ENCODE measurements at regions of chr16 and their contacts with region 1.

Region 1: GRCh38 chr16:49855280-49855821 is 561 bp downstream of the ZNF423 start:
- DNase-seq: peak; percentile 84
- H3K4me3 ChIP-seq: peak overlapping the region; percentile 70 to 79
- H3K27ac ChIP-seq: peak overlapping the region; percentile 85 to 86
- H3K4me1 ChIP-seq: peaks cover 9% of the 10 kb centered on the region
- H3K27me3 ChIP-seq: no peaks in the 10 kb centered on the region
- CTCF ChIP-seq: no peak
- POLR2A ChIP-seq: peak; percentile 63

Region 2: GRCh38 chr16:49491771-49492761 is 363.3 kb before region 1 on chr16:
- intact Hi-C with region 1: loop called (anchors 5 kb)
- DNase-seq: peak; percentile 59
- H3K4me3 ChIP-seq: peak overlapping the region; percentile 23 to 35
- H3K27ac ChIP-seq: no peak overlapping the region
- H3K4me1 ChIP-seq: peaks cover 4% of the 10 kb centered on the region
- H3K27me3 ChIP-seq: no peaks in the 10 kb centered on the region
- CTCF ChIP-seq: peak; percentile 79 to 91 (median 85)
- POLR2A ChIP-seq: no peak

Region 3: DNA sequence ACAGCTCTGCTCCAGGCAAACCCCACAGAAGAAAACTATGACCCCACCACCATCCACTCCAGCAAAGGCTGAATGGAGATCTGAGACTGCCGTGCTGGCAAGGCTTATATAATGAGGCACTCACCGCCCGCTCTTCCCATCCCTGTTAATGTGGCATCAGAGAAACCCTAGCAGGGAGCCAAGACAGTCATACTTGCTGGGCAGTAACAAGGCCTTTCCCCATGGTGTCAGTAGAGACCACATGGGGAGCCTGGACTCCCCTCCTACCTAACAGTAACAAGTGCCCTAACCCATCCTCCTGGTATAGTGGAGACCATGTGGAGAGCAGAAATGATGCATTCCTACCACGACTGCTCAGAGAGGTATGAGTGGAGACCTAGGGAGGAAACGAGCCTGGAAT is 246.6 kb before region 1 on chr16:
- intact Hi-C with region 1: loop called (anchors 5 kb)
- DNase-seq: no peak
- H3K4me3 ChIP-seq: no peak overlapping the region
- H3K27ac ChIP-seq: no peak overlapping the region
- H3K4me1 ChIP-seq: no peaks in the 10 kb centered on the region
- H3K27me3 ChIP-seq: peaks cover 2% of the 10 kb centered on the region
- CTCF ChIP-seq: peak in 1 of 4 experiments; percentile 42
- POLR2A ChIP-seq: no peak

Region 4: GRCh38 chr16:49652456-49653172 is 202.7 kb before region 1 on chr16:
- intact Hi-C with region 1: loop called (anchors 5 kb)
- DNase-seq: no peak
- H3K4me3 ChIP-seq: no peak overlapping the region
- H3K27ac ChIP-seq: peak overlapping the region in 1 of 2 donors; percentile 54
- H3K4me1 ChIP-seq: no peaks in the 10 kb centered on the region
- H3K27me3 ChIP-seq: no peaks in the 10 kb centered on the region
- CTCF ChIP-seq: no peak
- POLR2A ChIP-seq: no peak

Region 5: GRCh38 chr16:49698931-49699840 is 156.2 kb before region 1 on chr16:
- intact Hi-C with region 1: loop called (anchors 5 kb)
- DNase-seq: no peak
- H3K4me3 ChIP-seq: no peak overlapping the region
- H3K27ac ChIP-seq: peak overlapping the region; percentile 8 to 62
- H3K4me1 ChIP-seq: no peaks in the 10 kb centered on the region
- H3K27me3 ChIP-seq: no peaks in the 10 kb centered on the region
- CTCF ChIP-seq: no peak
- POLR2A ChIP-seq: no peak

Region 6: DNA sequence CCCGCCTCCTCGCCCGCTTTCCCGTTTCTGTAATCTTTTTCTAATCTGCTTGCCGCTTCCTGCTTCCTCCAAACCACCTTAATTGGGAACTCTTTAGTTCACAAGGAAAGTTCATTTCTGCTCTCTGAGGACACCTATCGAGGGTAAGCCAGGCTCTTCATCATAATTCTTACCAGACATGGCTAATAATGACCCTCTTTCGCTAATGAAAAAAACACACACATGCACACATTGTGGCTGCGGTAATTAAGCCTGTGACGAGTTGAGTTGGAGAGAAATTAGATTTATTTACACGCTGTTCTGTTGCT is 100.1 kb before region 1 on chr16:
- intact Hi-C with region 1: loop called (anchors 5 kb)
- DNase-seq: peak; percentile 16
- H3K4me3 ChIP-seq: peak overlapping the region; percentile 14 to 18
- H3K27ac ChIP-seq: peak overlapping the region; percentile 37 to 42
- H3K4me1 ChIP-seq: no peaks in the 10 kb centered on the region
- H3K27me3 ChIP-seq: no peaks in the 10 kb centered on the region
- CTCF ChIP-seq: peak in 3 of 4 experiments; percentile 24 to 46 (median 45)
- POLR2A ChIP-seq: no peak

Region 7: GRCh38 chr16:50152807-50153452 is 297.6 kb after region 1 on chr16 and contains the start of gene TENT4B:
- intact Hi-C with region 1: loop called (anchors 10 kb)
- DNase-seq: peak; percentile 79
- H3K4me3 ChIP-seq: peak within 1 kb of the TSS; percentile 72 to 91
- H3K27ac ChIP-seq: peak within 1 kb of the TSS; percentile 93 to 96
- H3K4me1 ChIP-seq: no peaks in the 10 kb centered on the region
- H3K27me3 ChIP-seq: no peaks in the 10 kb centered on the region
- CTCF ChIP-seq: peak in 1 of 4 experiments; percentile 4
- POLR2A ChIP-seq: peak; percentile 75
- total RNA-seq, gene TENT4B: 11.5 to 15.1 TPM